ENCODE measurements at regions of chr5 and their contacts with region 1.

Region 1: DNA sequence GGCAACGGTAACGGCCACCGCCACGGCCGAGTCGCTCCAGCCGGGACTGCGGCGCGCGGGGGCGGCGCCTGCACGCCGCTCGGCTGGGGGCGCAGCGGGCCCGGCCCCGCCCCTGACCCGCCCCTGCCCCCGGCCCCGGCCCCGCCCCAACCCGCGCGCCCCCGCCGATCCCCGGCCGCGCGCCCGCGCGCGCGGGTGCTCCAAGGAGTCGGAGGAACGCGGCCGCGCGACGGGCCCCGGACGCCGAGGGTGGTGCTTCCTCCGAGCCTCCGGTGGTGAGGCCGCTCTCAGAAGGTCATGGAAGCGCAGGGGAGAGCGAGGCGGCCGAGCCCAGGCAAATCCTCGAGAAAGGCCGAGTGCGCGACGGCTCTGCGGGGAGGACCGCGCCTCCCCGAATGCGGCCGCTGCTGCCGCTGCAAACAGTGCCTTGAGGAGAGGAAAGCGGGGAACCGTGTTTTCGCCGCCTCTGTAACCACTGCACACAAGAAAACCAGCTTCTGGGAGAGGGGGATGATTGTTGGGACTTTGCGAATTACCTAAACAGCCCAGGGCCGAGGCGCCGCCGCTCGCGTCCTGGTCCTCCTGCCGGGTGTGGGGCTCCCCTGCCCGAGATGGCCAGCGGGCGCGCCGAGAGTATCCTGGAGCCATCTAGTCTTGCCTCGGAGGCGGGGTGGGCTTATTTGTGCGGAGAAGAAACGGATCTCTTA is at the start of gene LIFR:
- DNase-seq: peak; percentile 74
- ATAC-seq: peak; percentile 93
- H3K4me3 ChIP-seq: peak within 1 kb of the TSS; percentile 92
- H3K27ac ChIP-seq: peak within 1 kb of the TSS; percentile 97
- H3K4me1 ChIP-seq: no peaks in the 10 kb centered on the region
- H3K27me3 ChIP-seq: peaks cover under 1% of the 10 kb centered on the region; the same call in 1 of the 2 replicates
- CTCF ChIP-seq: no peak
- POLR2A ChIP-seq: no peak
- RAD21 ChIP-seq: no peak
- total RNA-seq, gene LIFR: 10.4 and 13.9 TPM in 2 replicates

Region 2: GRCh38 chr5:38660194-38660668 is 103.5 kb after region 1 on chr5:
- CTCF ChIA-PET with region 1: no interaction called
- POLR2A ChIA-PET with region 1: no interaction called
- dilution Hi-C with region 1: no loop called
- in situ Hi-C with region 1: no loop called
- intact Hi-C with region 1: loop called (anchors 5 kb)
- DNase-seq: no peak
- ATAC-seq: no peak
- H3K4me3 ChIP-seq: no peak overlapping the region
- H3K27ac ChIP-seq: no peak overlapping the region
- H3K4me1 ChIP-seq: no peaks in the 10 kb centered on the region; the same call in 1 of the 2 replicates
- H3K27me3 ChIP-seq: peaks cover 12% of the 10 kb centered on the region
- CTCF ChIP-seq: no peak
- POLR2A ChIP-seq: no peak
- RAD21 ChIP-seq: no peak

Region 3: GRCh38 chr5:38765399-38765861 is 208.7 kb after region 1 on chr5:
- CTCF ChIA-PET with region 1: no interaction called
- POLR2A ChIA-PET with region 1: no interaction called
- dilution Hi-C with region 1: no loop called
- in situ Hi-C with region 1: no loop called
- intact Hi-C with region 1: loop called (anchors 5 kb)
- DNase-seq: peak; percentile 86
- ATAC-seq: peak; percentile 90
- H3K4me3 ChIP-seq: no peak overlapping the region
- H3K27ac ChIP-seq: peak overlapping the region; percentile 27; the same call in 1 of the 2 replicates
- H3K4me1 ChIP-seq: peaks cover 5% of the 10 kb centered on the region
- H3K27me3 ChIP-seq: peaks cover 25% of the 10 kb centered on the region
- CTCF ChIP-seq: no peak
- POLR2A ChIP-seq: no peak
- RAD21 ChIP-seq: no peak

Region 4: GRCh38 chr5:38922199-38922598 is 365.4 kb after region 1 on chr5:
- CTCF ChIA-PET with region 1: no interaction called
- POLR2A ChIA-PET with region 1: no interaction called
- dilution Hi-C with region 1: no loop called
- in situ Hi-C with region 1: no loop called
- intact Hi-C with region 1: loop called (anchors 10 kb)
- DNase-seq: peak; percentile 51
- ATAC-seq: peak; percentile 43
- H3K4me3 ChIP-seq: no peak overlapping the region
- H3K27ac ChIP-seq: no peak overlapping the region
- H3K4me1 ChIP-seq: peaks cover 12% of the 10 kb centered on the region
- H3K27me3 ChIP-seq: no peaks in the 10 kb centered on the region
- CTCF ChIP-seq: peak; percentile 65
- POLR2A ChIP-seq: no peak
- RAD21 ChIP-seq: peak; percentile 77